Activated B cell treated with CpG ODN at 0.5 μM for 24 hours (primary cell): ENCODE measurements at regions of chr17 and their contacts with region 1.

Region 1: DNA sequence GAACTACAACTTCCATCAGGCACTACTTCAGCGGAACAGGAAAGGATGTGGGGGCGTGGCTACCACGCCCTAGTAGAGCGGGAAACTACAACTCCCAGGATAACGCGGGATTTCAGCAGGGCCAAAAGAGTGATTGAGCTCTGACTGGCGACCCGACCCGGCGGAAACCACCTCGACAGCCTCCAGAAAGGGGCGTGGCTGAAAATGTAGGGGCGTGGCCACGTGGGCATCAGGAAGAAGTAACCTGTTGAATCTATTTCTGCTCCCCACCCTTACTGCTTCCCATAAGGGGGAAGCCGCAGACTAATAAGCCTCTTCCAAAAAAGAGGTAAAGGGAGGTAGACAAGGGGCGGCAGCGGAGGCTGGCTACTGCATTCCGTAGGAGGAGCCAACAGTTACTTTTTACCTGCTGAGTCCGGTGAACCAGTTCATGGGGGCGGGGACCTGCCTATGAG is at the start of gene TMEM102:
- DNase-seq: peak; percentile 95
- ATAC-seq: peak; percentile 87
- H3K4me3 Mint-ChIP-seq: peak within 1 kb of the TSS; percentile 94
- H3K27ac Mint-ChIP-seq: peak within 1 kb of the TSS; percentile 93
- H3K4me1 Mint-ChIP-seq: peaks cover 45% of the 10 kb centered on the region
- H3K27me3 Mint-ChIP-seq: peaks cover 15% of the 10 kb centered on the region
- CTCF ChIP-seq: no peak
- total RNA-seq, gene TMEM102: 13.4 and 14.8 TPM in 2 replicates

Region 2: DNA sequence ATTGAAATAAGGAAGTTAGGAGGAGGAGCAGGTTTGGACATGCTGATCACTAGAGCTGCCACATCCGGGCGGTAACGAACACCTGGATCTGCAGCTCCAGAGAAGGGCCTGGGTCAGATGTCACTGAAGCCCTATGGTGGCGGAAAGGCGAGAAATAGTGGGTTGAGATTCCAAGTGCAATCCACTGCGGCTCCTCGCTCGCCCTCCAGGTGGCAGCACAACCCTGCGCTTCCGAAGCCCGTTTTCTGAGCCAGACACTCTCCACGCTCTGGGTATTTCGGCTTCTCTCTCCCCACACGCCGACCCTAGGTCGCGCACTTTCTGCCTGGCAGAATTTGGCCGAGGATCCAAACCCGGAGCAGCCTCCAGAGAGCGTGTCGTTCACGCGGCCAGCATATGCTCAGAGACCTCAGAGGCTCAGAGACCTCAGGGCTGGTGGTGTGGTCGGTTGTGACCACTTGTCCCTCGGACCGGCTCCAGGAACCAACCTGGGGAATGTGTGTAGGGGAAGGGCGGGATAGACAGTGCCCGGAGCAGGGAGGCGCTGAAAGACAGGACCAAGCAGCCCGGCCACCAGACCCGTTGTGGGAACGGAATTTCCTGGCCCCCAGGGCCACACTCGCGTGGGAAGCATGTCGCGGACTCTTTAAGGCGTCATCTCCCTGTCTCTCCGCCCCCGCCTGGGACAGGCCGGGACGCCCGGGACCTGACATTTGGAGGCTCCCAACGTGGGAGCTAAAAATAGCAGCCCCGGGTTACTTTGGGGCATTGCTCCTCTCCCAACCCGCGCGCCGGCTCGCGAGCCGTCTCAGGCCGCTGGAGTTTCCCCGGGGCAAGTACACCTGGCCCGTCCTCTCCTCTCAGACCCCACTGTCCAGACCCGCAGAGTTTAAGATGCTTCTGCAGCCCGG is 154.5 kb before region 1 on chr17:
- CTCF ChIA-PET with region 1: interaction called, 7 read pairs
- POLR2A ChIA-PET with region 1: interaction called, 4 read pairs
- intact Hi-C with region 1: loop called (anchors 1 kb)
- DNase-seq: peak; percentile 82
- ATAC-seq: peak; percentile 83
- H3K4me3 Mint-ChIP-seq: peak overlapping the region; percentile 82
- H3K27ac Mint-ChIP-seq: peak overlapping the region; percentile 77
- H3K4me1 Mint-ChIP-seq: peaks cover 14% of the 10 kb centered on the region
- H3K27me3 Mint-ChIP-seq: peaks cover 12% of the 10 kb centered on the region
- CTCF ChIP-seq: peak; percentile 42

Region 3: GRCh38 chr17:7383742-7384488 is 51.3 kb before region 1 on chr17:
- CTCF ChIA-PET with region 1: no interaction called
- POLR2A ChIA-PET with region 1: interaction called, 7 read pairs
- intact Hi-C with region 1: loop called (anchors 1 kb)
- DNase-seq: peak; percentile 82
- ATAC-seq: peak; percentile 98
- H3K4me3 Mint-ChIP-seq: peak overlapping the region; percentile 86
- H3K27ac Mint-ChIP-seq: peak overlapping the region; percentile 80
- H3K4me1 Mint-ChIP-seq: peaks cover 10% of the 10 kb centered on the region
- H3K27me3 Mint-ChIP-seq: peaks cover 29% of the 10 kb centered on the region
- CTCF ChIP-seq: no peak

Region 4: DNA sequence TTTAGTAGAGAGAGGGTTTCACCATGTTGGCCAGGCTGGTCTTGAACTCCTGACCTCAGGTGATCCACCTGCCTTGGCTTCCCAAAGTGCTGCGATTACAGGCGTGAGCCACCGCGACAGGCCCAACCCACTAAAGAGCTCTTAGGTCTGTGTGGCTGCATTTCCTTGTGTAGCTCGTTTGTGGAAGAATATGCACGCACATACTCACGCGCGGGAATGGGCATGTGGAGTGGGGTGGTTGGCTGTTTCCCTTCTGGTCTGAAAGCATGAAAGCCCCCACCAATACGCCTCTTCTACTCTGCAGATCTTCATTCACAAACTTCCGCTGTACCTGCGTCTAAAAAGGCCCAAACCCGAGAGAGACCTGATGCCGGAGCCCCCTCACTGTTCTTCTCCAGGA is 19.7 kb after region 1 on chr17:
- CTCF ChIA-PET with region 1: interaction called, 4 read pairs
- POLR2A ChIA-PET with region 1: interaction called, 15 read pairs
- intact Hi-C with region 1: loop called (anchors 1 kb)
- DNase-seq: no peak
- ATAC-seq: no peak
- H3K4me3 Mint-ChIP-seq: peak overlapping the region; percentile 94
- H3K27ac Mint-ChIP-seq: peak overlapping the region; percentile 88
- H3K4me1 Mint-ChIP-seq: peaks cover 12% of the 10 kb centered on the region
- H3K27me3 Mint-ChIP-seq: peaks cover 4% of the 10 kb centered on the region
- CTCF ChIP-seq: no peak

Region 5: GRCh38 chr17:7589204-7589868 is 154.1 kb after region 1 on chr17:
- CTCF ChIA-PET with region 1: interaction called, 15 read pairs
- POLR2A ChIA-PET with region 1: interaction called, 4 read pairs
- intact Hi-C with region 1: no loop called
- DNase-seq: peak; percentile 66
- ATAC-seq: peak; percentile 89
- H3K4me3 Mint-ChIP-seq: no peak overlapping the region
- H3K27ac Mint-ChIP-seq: no peak overlapping the region
- H3K4me1 Mint-ChIP-seq: peaks cover 13% of the 10 kb centered on the region
- H3K27me3 Mint-ChIP-seq: no peaks in the 10 kb centered on the region
- CTCF ChIP-seq: peak; percentile 44